Ascending aorta (tissue), 2 donors: ENCODE measurements at regions of chr5 and their contacts with region 1.

Region 1: GRCh38 chr5:37323607-37324006 is 47.3 kb downstream of the NUP155 start:
- DNase-seq: no peak
- H3K4me3 ChIP-seq: no peak overlapping the region
- H3K27ac ChIP-seq: no peak overlapping the region
- H3K4me1 ChIP-seq: no peaks in the 10 kb centered on the region
- H3K27me3 ChIP-seq: no peaks in the 10 kb centered on the region
- CTCF ChIP-seq: no peak

Region 2: DNA sequence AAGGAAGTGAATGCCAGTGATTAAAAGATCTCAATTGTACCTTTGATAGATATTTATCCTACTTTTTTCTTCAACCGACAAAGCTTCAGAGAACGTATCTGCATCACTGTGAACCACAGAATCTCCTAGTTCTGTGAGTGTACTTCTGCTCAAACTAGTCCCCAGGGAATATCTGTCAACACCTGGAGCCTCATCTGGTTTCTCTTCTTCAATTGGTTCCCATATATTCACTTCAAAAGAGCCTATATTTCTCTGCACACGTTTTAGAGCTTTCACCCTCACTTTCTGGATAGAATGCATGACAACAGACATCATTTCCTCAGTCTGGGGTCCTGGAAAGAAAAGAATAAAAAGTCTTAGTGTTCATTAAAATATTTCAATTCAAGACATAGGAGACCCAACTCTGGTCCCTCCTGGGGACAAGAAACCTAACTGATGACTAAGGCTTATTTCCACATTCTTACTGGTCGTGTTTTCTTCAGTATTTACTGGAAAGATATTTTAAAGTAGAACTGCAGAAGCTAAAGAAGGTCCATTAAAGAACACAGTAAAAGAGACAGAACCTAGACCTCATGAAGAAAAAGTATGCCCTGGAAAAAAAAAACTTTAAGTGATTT is 138.8 kb before region 1 on chr5:
- intact Hi-C with region 1: loop called (anchors 10 kb)
- DNase-seq: no peak
- H3K4me3 ChIP-seq: no peak overlapping the region
- H3K27ac ChIP-seq: no peak overlapping the region
- H3K4me1 ChIP-seq: no peaks in the 10 kb centered on the region
- H3K27me3 ChIP-seq: no peaks in the 10 kb centered on the region
- CTCF ChIP-seq: no peak

Region 3: GRCh38 chr5:37304888-37305287 is 18.7 kb before region 1 on chr5:
- intact Hi-C with region 1: no loop called
- DNase-seq: no peak
- H3K4me3 ChIP-seq: no peak overlapping the region
- H3K27ac ChIP-seq: no peak overlapping the region
- H3K4me1 ChIP-seq: no peaks in the 10 kb centered on the region
- H3K27me3 ChIP-seq: no peaks in the 10 kb centered on the region
- CTCF ChIP-seq: no peak

Region 4: DNA sequence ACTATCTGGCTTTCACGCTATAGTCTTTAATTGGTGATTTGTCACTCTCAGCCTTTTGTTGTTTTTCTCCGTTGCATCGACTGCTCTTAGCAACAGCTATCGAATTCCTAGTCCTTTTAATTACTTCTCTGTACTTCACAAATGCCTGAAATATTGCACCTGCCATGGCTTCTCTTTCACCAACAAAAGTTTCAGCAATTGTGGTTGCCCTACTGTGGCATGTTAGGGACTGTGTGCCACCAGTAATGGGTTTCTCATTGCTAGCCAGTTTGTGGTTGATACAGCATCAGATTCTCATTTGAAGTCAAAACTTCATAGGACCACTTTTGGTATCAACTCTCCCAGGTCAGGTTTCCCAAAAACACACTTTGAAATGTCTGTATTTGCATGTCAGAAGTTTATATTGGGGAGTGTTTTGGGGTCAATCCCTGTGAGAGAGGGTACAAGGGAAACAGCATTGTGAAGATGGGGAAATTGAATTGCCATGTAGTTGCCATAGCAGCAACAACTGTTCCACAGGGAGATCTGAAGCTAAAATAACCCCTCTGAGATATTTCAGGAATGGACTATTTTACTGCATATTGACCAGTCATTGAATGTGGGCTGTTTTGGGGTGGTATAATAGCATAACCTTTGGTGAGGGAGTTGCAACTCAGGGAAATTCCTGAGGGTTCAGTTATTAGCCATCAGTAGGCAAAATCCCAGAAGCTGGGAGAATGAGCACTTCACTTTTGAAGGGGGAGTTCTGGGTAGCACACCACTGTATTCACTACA is 154.7 kb after region 1 on chr5:
- intact Hi-C with region 1: no loop called
- DNase-seq: no peak
- H3K4me3 ChIP-seq: no peak overlapping the region
- H3K27ac ChIP-seq: no peak overlapping the region
- H3K4me1 ChIP-seq: no peaks in the 10 kb centered on the region
- H3K27me3 ChIP-seq: no peaks in the 10 kb centered on the region
- CTCF ChIP-seq: no peak